HepG2 (cell line): ENCODE measurements at regions of chr2 and their contacts with region 1.

Region 1: DNA sequence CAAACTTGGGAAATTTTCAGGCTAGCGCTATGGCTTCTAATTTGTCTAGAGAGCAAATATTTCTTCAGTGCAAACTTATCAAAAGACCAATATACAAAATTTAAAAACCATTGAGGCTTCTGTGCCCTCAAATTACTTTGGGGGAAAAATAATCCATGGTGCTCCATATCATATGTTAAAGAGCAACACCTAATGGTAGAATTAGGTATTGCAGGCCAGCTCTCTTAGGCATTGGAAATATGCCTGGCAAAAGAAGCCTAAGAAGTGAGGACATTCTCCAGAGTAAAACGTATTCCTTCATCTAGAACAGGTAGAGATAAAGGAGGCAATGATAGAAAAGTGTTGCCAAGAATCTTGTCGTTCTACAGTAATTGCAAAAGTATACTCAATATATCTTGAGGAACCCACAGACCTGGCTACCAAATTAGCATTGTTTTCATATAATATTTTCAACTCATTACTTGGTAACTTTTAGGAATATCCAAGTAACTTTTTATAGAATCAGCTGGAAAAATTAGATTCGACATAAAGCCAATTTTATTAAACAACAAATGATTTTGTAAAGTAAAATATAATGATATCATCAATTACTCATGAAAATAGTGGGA is 401.1 kb downstream of the BCL11A start:
- DNase-seq: peak; percentile 26
- ATAC-seq: no peak
- H3K4me3 ChIP-seq: no peak overlapping the region
- H3K27ac ChIP-seq: no peak overlapping the region
- H3K4me1 ChIP-seq: no peaks in the 10 kb centered on the region
- H3K27me3 ChIP-seq: peaks cover 0 to 16% of the 10 kb centered on the region in 2 experiments; a peak in 2 of 5 replicates
- CTCF ChIP-seq: peak; percentile 76
- EP300 ChIP-seq: no peak
- POLR2A ChIP-seq: no peak
- RAD21 ChIP-seq: peak; percentile 49

Region 2: DNA sequence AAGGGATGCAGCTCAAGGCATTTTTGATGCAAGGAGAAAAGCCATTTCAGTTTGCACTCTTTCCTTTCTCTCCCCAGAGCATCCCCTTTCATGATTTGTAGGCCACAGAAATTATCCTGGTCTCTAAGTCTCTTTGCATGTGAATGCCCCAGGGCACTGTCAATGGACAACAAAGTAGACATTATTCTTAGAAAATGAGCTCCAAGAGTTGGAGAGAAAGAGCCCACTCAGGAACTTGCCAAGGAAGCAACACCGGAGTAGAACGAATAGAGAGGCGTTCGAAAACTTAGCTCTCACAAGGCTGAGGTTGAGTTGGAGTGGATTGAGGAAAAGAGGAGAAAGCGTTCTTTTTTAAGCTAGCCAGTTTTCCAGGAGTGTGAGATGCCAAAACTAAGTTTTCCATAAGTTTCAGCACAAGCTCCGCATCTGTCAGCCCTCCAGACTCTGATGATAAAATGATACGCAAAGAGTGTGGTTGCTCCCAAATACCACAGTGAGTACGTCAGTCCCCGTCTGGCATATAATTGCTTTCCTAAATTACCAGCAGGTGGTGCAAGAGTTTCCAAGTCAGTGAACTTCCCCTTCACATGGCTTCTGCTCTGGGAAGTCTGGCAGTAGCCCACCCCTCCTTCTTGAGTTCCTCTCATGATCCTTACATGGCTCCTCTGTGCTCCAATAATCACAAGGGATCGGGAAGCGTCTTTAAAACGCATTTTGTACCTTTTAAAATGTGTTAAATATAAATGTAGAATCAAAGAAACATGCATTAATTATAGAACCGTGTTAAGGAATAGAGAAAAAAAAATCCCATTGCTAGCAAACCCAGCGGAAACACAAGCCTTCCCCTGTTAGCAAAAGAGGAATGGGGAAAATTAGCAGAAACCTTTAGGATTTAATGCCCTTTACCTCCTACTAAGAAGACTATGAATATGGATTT is 850.6 kb before region 1 on chr2:
- CTCF ChIA-PET with region 1: interaction called, 14 read pairs
- POLR2A ChIA-PET with region 1: no interaction called
- in situ Hi-C with region 1: no loop called
- intact Hi-C with region 1: no loop called
- DNase-seq: peak; percentile 67
- ATAC-seq: peak; percentile 97
- H3K4me3 ChIP-seq: no peak overlapping the region
- H3K27ac ChIP-seq: no peak overlapping the region
- H3K4me1 ChIP-seq: no peaks in the 10 kb centered on the region
- H3K27me3 ChIP-seq: no peaks in the 10 kb centered on the region
- CTCF ChIP-seq: peak; percentile 75
- EP300 ChIP-seq: no peak
- POLR2A ChIP-seq: no peak
- RAD21 ChIP-seq: peak; percentile 32; the same call in 1 of the 2 replicates

Region 3: DNA sequence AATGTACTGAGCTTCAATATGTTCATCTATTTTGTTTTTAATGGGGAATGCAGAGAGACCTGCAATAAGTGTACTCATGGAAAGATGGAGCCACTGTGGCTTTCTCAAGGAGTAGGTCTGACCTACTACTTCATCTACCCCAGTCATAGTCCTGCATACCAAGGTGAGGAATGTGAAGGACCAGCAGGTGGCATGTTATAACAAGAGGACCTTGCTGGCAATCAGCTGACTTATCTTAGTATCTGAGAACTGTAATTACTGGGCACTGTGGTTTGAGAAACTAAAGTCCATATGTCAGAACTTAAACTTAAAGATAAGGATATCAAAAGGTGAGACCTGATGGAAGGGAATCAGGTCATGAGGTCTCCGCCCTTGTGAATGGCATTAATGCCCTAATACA is 703.1 kb before region 1 on chr2:
- CTCF ChIA-PET with region 1: no interaction called
- POLR2A ChIA-PET with region 1: no interaction called
- in situ Hi-C with region 1: no loop called
- intact Hi-C with region 1: loop called (anchors 10 kb)
- DNase-seq: no peak
- ATAC-seq: no peak
- H3K4me3 ChIP-seq: no peak overlapping the region
- H3K27ac ChIP-seq: no peak overlapping the region
- H3K4me1 ChIP-seq: no peaks in the 10 kb centered on the region
- H3K27me3 ChIP-seq: no peaks in the 10 kb centered on the region
- CTCF ChIP-seq: peak; percentile 14; the same call in 1 of the 2 replicates
- EP300 ChIP-seq: no peak
- POLR2A ChIP-seq: no peak
- RAD21 ChIP-seq: no peak

Region 4: GRCh38 chr2:60002158-60002867 is 150.0 kb before region 1 on chr2:
- CTCF ChIA-PET with region 1: no interaction called
- POLR2A ChIA-PET with region 1: no interaction called
- in situ Hi-C with region 1: no loop called
- intact Hi-C with region 1: loop called (anchors 5 kb)
- DNase-seq: no peak
- ATAC-seq: peak; percentile 46; the same call in 1 of the 3 replicates
- H3K4me3 ChIP-seq: no peak overlapping the region
- H3K27ac ChIP-seq: no peak overlapping the region
- H3K4me1 ChIP-seq: no peaks in the 10 kb centered on the region
- H3K27me3 ChIP-seq: no peaks in the 10 kb centered on the region
- CTCF ChIP-seq: peak; percentile 15; the same call in 1 of the 2 replicates
- EP300 ChIP-seq: no peak
- POLR2A ChIP-seq: no peak
- RAD21 ChIP-seq: no peak